ENCODE measurements at regions of chr5 and their contacts with region 1.

Region 1: GRCh38 chr5:143605403-143606005 is 202.0 kb upstream of the NR3C1 start:
- DNase-seq: peak; percentile 55
- ATAC-seq: peak; percentile 58
- H3K4me3 Mint-ChIP-seq: peak overlapping the region; percentile 34
- H3K27ac Mint-ChIP-seq: peak overlapping the region; percentile 91
- H3K4me1 Mint-ChIP-seq: peaks cover 35% of the 10 kb centered on the region
- H3K27me3 Mint-ChIP-seq: peaks cover 4% of the 10 kb centered on the region

Region 2: DNA sequence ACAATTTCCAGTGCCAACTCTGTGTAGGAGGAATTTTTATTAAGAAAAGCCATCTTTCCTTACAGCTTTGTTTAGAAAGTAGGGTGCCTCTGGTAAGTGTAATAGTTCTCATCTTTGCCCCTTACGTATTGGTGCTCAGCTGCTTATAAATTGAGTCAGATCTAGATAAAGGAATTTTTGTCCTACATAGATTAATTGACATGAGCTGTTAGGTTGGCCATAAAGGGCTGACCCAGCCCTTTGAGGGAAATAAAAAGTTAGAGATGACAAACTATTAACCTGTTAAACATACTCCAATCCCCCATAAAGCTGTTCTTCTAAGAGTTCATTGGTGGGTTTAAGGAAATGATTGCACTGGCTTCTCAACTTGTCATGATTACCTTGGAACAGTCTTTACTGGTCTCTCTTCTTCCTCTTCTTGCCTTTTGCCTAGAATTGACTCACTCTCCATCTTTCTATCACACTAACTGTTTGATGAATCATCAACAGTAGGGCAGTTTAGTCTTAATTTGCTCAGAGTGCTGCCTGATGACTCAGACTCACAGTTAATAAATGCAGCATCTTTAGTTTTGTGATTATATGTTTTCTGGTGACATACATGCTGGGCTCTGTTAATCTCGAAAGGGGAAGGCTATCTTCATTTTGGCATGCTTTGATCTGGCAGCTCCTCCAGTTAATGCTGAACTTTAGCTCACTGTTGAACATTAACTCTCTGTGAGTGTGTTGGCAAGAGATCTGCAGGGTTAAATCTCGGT is 783.6 kb before region 1 on chr5:
- CTCF ChIA-PET with region 1: no interaction called
- POLR2A ChIA-PET with region 1: no interaction called
- intact Hi-C with region 1: loop called in 1 of 2 experiments (anchors 10 kb)
- DNase-seq: peak; percentile 29
- ATAC-seq: peak; percentile 93
- H3K4me3 Mint-ChIP-seq: no peak overlapping the region
- H3K27ac Mint-ChIP-seq: peak overlapping the region; percentile 53
- H3K4me1 Mint-ChIP-seq: peaks cover 74% of the 10 kb centered on the region
- H3K27me3 Mint-ChIP-seq: no peaks in the 10 kb centered on the region

Region 3: GRCh38 chr5:143008809-143009521 is 596.5 kb before region 1 on chr5:
- CTCF ChIA-PET with region 1: no interaction called
- POLR2A ChIA-PET with region 1: no interaction called
- intact Hi-C with region 1: loop called (anchors 1 to 10 kb)
- DNase-seq: peak; percentile 87
- ATAC-seq: peak; percentile 91
- H3K4me3 Mint-ChIP-seq: peak overlapping the region; percentile 34
- H3K27ac Mint-ChIP-seq: peak overlapping the region; percentile 83
- H3K4me1 Mint-ChIP-seq: peaks cover 56% of the 10 kb centered on the region
- H3K27me3 Mint-ChIP-seq: no peaks in the 10 kb centered on the region

Region 4: GRCh38 chr5:143086908-143087637 is 518.4 kb before region 1 on chr5:
- CTCF ChIA-PET with region 1: no interaction called
- POLR2A ChIA-PET with region 1: no interaction called
- intact Hi-C with region 1: no loop called
- DNase-seq: no peak
- ATAC-seq: no peak
- H3K4me3 Mint-ChIP-seq: no peak overlapping the region
- H3K27ac Mint-ChIP-seq: no peak overlapping the region
- H3K4me1 Mint-ChIP-seq: peaks cover 6% of the 10 kb centered on the region
- H3K27me3 Mint-ChIP-seq: no peaks in the 10 kb centered on the region

Region 5: GRCh38 chr5:143182901-143183820 is 422.3 kb before region 1 on chr5:
- CTCF ChIA-PET with region 1: no interaction called
- POLR2A ChIA-PET with region 1: no interaction called
- intact Hi-C with region 1: loop called in 1 of 2 experiments (anchors 5 kb)
- DNase-seq: peak; percentile 84
- ATAC-seq: peak; percentile 79
- H3K4me3 Mint-ChIP-seq: peak overlapping the region; percentile 9
- H3K27ac Mint-ChIP-seq: peak overlapping the region; percentile 79
- H3K4me1 Mint-ChIP-seq: peaks cover 47% of the 10 kb centered on the region
- H3K27me3 Mint-ChIP-seq: no peaks in the 10 kb centered on the region

Region 6: GRCh38 chr5:143576711-143577484 is 28.6 kb before region 1 on chr5:
- CTCF ChIA-PET with region 1: interaction called, 5 read pairs
- POLR2A ChIA-PET with region 1: interaction called, 7 read pairs
- intact Hi-C with region 1: loop called in 1 of 2 experiments (anchors 1 kb)
- DNase-seq: no peak
- ATAC-seq: peak; percentile 43
- H3K4me3 Mint-ChIP-seq: no peak overlapping the region
- H3K27ac Mint-ChIP-seq: no peak overlapping the region
- H3K4me1 Mint-ChIP-seq: peaks cover 6% of the 10 kb centered on the region
- H3K27me3 Mint-ChIP-seq: no peaks in the 10 kb centered on the region

Region 7: GRCh38 chr5:143648696-143649095 is 43.2 kb after region 1 on chr5:
- CTCF ChIA-PET with region 1: no interaction called
- POLR2A ChIA-PET with region 1: no interaction called
- intact Hi-C with region 1: loop called (anchors 1 kb)
- DNase-seq: peak; percentile 26
- ATAC-seq: no peak
- H3K4me3 Mint-ChIP-seq: no peak overlapping the region
- H3K27ac Mint-ChIP-seq: no peak overlapping the region
- H3K4me1 Mint-ChIP-seq: peaks cover 17% of the 10 kb centered on the region
- H3K27me3 Mint-ChIP-seq: no peaks in the 10 kb centered on the region

Region 8: DNA sequence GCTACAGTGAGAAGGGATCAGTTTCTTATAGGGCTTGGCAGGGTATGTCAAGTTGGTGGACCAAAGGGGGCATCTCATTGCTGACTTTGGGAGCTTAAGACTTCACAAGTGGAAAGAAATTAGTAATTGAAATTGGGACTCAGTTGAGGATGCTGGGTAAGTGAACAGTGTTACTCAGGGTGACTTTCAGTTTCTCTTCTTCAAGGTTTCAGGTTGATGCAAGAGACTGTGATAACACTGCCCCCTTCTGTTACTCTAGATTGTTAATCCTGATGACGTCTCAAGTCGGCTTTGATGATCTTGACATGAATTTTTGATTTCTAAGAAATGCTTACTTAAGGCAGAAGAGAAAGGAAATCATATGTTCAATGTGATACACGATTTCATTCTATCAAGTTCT is 586.5 kb after region 1 on chr5:
- CTCF ChIA-PET with region 1: no interaction called
- POLR2A ChIA-PET with region 1: no interaction called
- intact Hi-C with region 1: loop called (anchors 1 kb)
- DNase-seq: peak; percentile 19
- ATAC-seq: peak; percentile 74
- H3K4me3 Mint-ChIP-seq: no peak overlapping the region
- H3K27ac Mint-ChIP-seq: no peak overlapping the region
- H3K4me1 Mint-ChIP-seq: peaks cover 22% of the 10 kb centered on the region
- H3K27me3 Mint-ChIP-seq: no peaks in the 10 kb centered on the region